Naive thymus-derived CD4-positive, alpha-beta T cell (primary cell): ENCODE measurements at regions of chr20 and their contacts with region 1.

Region 1: DNA sequence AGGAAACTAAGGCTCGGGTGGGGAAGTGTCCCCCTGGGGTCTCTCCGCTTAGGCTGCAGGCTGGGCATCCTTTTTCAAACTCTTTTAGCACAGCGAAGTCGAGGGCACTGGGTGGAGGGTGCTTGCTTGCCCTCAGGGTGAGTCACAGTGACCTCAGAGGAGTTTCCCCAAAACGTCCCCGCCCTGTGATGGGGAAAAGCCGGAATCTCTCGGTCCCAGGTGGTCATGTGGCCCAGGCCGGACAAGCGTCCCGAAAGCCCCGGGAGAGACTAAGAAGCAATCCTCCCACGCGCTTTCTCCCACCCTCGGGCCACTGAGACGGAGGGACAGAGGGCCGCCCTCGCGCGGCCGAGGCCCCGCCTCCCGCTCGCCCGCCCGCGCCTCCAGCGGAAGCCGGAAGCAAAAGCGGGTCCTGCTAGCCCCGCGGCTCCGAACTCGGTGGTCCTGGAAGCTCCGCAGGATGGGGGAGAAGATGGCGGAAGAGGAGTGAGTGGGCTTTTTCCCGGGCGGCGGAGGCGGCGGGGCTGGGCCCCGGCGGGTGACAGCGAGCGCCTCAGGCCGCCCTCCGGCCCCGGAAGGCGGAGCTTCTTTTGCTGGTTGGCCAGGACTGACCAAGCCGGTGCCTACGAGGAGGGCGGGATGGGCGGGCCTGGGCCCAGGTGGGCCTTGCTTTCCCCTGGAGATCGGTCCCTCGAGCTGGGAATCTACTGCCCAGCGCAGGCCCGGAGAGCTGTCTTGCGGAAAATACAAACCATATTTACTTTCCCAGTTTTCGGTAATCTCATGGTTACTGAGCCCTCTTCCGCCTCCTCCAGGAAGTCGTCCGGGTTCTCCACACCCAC is at the start of gene SLC9A8:
- DNase-seq: peak; percentile 67 to 85 (median 75)
- ATAC-seq: peak; percentile 93
- H3K4me3 ChIP-seq: peak within 1 kb of the TSS; percentile 81
- H3K4me3 Mint-ChIP-seq: peak within 1 kb of the TSS; percentile 90 to 99 (median 94)
- H3K27ac ChIP-seq: peak within 1 kb of the TSS; percentile 95
- H3K27ac Mint-ChIP-seq: peak within 1 kb of the TSS; percentile 94 to 98 (median 96)
- H3K4me1 ChIP-seq: peaks cover 12 to 17% of the 10 kb centered on the region in 2 donors
- H3K4me1 Mint-ChIP-seq: peaks cover 13 to 44% (median 39%) of the 10 kb centered on the region in 7 donors
- H3K27me3 ChIP-seq: no peaks in the 10 kb centered on the region
- H3K27me3 Mint-ChIP-seq: no peaks in the 10 kb centered on the region
- total RNA-seq, gene SLC9A8: 21.7 to 42.5 (median 25.7) TPM

Region 2: GRCh38 chr20:49713753-49714712 is 98.7 kb before region 1 on chr20 and contains the start of gene B4GALT5:
- CTCF ChIA-PET with region 1: interaction called, 5 read pairs
- POLR2A ChIA-PET with region 1: interaction called, 3 read pairs
- intact Hi-C with region 1: loop called (anchors 1 to 2 kb)
- DNase-seq: peak in 8 of 9 donors; percentile 26 to 82 (median 47)
- ATAC-seq: peak; percentile 90
- H3K4me3 ChIP-seq: peak within 1 kb of the TSS; percentile 67
- H3K4me3 Mint-ChIP-seq: peak within 1 kb of the TSS; percentile 86 to 93 (median 90)
- H3K27ac ChIP-seq: peak within 1 kb of the TSS; percentile 66
- H3K27ac Mint-ChIP-seq: peak within 1 kb of the TSS; percentile 53 to 89 (median 81)
- H3K4me1 ChIP-seq: peaks cover 7 to 15% of the 10 kb centered on the region in 2 donors
- H3K4me1 Mint-ChIP-seq: peaks cover 26 to 43% (median 38%) of the 10 kb centered on the region in 7 donors
- H3K27me3 ChIP-seq: no peaks in the 10 kb centered on the region
- H3K27me3 Mint-ChIP-seq: peaks cover 0 to 4% (median 0%) of the 10 kb centered on the region in 5 donors
- total RNA-seq, gene B4GALT5: 3.3 to 23.1 (median 4.6) TPM

Region 3: GRCh38 chr20:49797344-49797615 is 15.4 kb before region 1 on chr20:
- CTCF ChIA-PET with region 1: no interaction called
- POLR2A ChIA-PET with region 1: interaction called, 5 read pairs
- intact Hi-C with region 1: loop called in 1 of 2 experiments (anchors 1 kb)
- DNase-seq: no peak
- ATAC-seq: no peak
- H3K4me3 ChIP-seq: no peak overlapping the region
- H3K4me3 Mint-ChIP-seq: no peak overlapping the region
- H3K27ac ChIP-seq: no peak overlapping the region
- H3K27ac Mint-ChIP-seq: no peak overlapping the region
- H3K4me1 ChIP-seq: peaks cover 6% of the 10 kb centered on the region in 2 donors
- H3K4me1 Mint-ChIP-seq: peaks cover under 1 to 42% (median 10%) of the 10 kb centered on the region in 7 donors
- H3K27me3 ChIP-seq: no peaks in the 10 kb centered on the region
- H3K27me3 Mint-ChIP-seq: peaks cover 7 to 34% (median 16%) of the 10 kb centered on the region in 5 donors

Region 4: GRCh38 chr20:49823152-49823847 is 10.6 kb after region 1 on chr20:
- CTCF ChIA-PET with region 1: interaction called, 3 read pairs
- POLR2A ChIA-PET with region 1: interaction called, 8 read pairs
- intact Hi-C with region 1: loop called (anchors 1 kb)
- DNase-seq: peak in 7 of 9 donors; percentile 43 to 79 (median 64)
- ATAC-seq: peak; percentile 93
- H3K4me3 ChIP-seq: no peak overlapping the region
- H3K4me3 Mint-ChIP-seq: peak overlapping the region; percentile 45 to 83 (median 64)
- H3K27ac ChIP-seq: peak overlapping the region; percentile 54
- H3K27ac Mint-ChIP-seq: peak overlapping the region; percentile 29 to 92 (median 82)
- H3K4me1 ChIP-seq: peaks cover 25 to 27% of the 10 kb centered on the region in 2 donors
- H3K4me1 Mint-ChIP-seq: peaks cover 35 to 59% (median 55%) of the 10 kb centered on the region in 7 donors
- H3K27me3 ChIP-seq: no peaks in the 10 kb centered on the region
- H3K27me3 Mint-ChIP-seq: no peaks in the 10 kb centered on the region

Region 5: GRCh38 chr20:49915378-49916145 is 102.9 kb after region 1 on chr20 and contains the start of gene SPATA2:
- CTCF ChIA-PET with region 1: no interaction called
- POLR2A ChIA-PET with region 1: no interaction called
- intact Hi-C with region 1: loop called (anchors 1 kb)
- DNase-seq: peak; percentile 87 to 99 (median 93)
- ATAC-seq: peak; percentile 88
- H3K4me3 ChIP-seq: peak within 1 kb of the TSS; percentile 93
- H3K4me3 Mint-ChIP-seq: peak within 1 kb of the TSS; percentile 96 to 99 (median 97)
- H3K27ac ChIP-seq: peak within 1 kb of the TSS; percentile 100
- H3K27ac Mint-ChIP-seq: peak within 1 kb of the TSS; percentile 97 to 100 (median 99)
- H3K4me1 ChIP-seq: peaks cover 11 to 16% of the 10 kb centered on the region in 2 donors
- H3K4me1 Mint-ChIP-seq: peaks cover 25 to 48% (median 36%) of the 10 kb centered on the region in 7 donors
- H3K27me3 ChIP-seq: no peaks in the 10 kb centered on the region
- H3K27me3 Mint-ChIP-seq: no peaks in the 10 kb centered on the region
- total RNA-seq, gene SPATA2: 9.0 to 18.4 (median 10.0) TPM